ENCODE measurements at regions of chr17 and their contacts with region 1.

Region 1: GRCh38 chr17:28896884-28897768 is at the start of gene FLOT2:
- DNase-seq: peak; percentile 71 to 86 (median 84)
- ATAC-seq: peak; percentile 79 to 81
- H3K4me3 ChIP-seq: peak within 1 kb of the TSS; percentile 66
- H3K27ac ChIP-seq: peak within 1 kb of the TSS; percentile 71
- H3K4me1 ChIP-seq: peaks cover 9% of the 10 kb centered on the region
- H3K27me3 ChIP-seq: no peaks in the 10 kb centered on the region
- total RNA-seq, gene FLOT2: 70.5 to 89.4 (median 79.4) TPM

Region 2: DNA sequence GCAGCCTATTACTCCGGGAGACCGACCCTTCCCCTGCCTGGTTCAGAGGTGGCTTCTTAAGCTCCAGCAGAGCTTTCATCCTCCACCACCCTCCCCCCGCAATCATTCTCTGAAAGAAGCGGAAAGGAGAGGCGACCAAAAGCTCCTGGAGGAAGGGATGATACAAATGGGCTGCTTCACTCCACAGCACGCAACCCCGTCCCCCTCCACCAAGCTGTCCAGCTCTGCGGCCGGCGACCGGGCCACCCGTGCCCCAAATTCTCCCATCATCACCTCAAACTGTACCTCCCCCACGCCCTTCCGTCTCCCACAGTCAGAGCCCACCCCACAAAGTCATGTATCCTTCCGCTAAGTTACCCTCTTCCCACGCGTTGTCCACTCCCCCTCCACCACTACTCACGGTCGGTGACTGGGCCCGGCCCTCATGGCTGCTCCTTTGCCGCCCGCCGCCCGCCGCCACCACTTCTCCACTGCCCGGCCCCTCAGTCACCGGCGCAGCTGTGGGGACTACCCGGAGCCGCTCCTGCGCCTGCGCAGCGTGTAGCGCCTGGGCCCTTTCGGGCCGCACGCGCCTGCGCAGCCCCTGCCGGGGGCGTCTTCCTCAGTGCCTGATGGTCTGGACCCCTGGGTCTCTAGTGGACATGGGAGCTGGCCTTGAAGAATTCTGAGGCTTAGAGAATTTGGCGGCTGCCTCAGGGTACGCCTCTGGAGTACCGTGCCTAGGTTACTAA is 54.7 kb before region 1 on chr17 and contains the start of gene FAM222B:
- intact Hi-C with region 1: loop called in 1 of 4 experiments (anchors 5 kb)
- DNase-seq: peak; percentile 89 to 95 (median 94)
- ATAC-seq: peak; percentile 99 to 100
- H3K4me3 ChIP-seq: peak within 1 kb of the TSS; percentile 70
- H3K27ac ChIP-seq: peak within 1 kb of the TSS; percentile 84
- H3K4me1 ChIP-seq: no peaks in the 10 kb centered on the region
- H3K27me3 ChIP-seq: no peaks in the 10 kb centered on the region
- total RNA-seq, gene FAM222B: 15.3 to 19.6 (median 18.6) TPM

Region 3: DNA sequence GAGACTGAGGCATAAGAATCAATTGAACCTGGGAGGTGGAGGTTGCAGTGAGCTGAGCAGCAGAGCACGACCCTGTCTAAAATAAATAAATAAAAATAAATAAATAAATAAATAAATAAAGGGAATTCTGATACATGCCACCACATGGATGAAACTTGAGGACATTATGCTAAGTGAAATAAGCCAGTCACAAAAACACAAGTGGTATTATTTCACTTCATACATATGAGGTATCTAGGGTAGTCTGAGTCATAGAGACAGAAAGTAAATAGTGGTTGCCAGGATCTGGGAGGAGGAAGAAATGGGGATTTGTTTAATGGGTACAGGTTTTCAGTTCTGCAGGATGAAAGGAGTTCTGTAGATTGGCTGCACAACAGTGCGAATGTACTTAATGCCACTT is 162.2 kb after region 1 on chr17:
- intact Hi-C with region 1: no loop called
- DNase-seq: no peak
- ATAC-seq: no peak
- H3K4me3 ChIP-seq: no peak overlapping the region
- H3K27ac ChIP-seq: no peak overlapping the region
- H3K4me1 ChIP-seq: no peaks in the 10 kb centered on the region
- H3K27me3 ChIP-seq: no peaks in the 10 kb centered on the region

Region 4: GRCh38 chr17:29069526-29070041 is 172.5 kb after region 1 on chr17:
- intact Hi-C with region 1: no loop called
- DNase-seq: peak in 1 of 3 donors; percentile 39
- ATAC-seq: peak; percentile 31 to 37
- H3K4me3 ChIP-seq: no peak overlapping the region
- H3K27ac ChIP-seq: no peak overlapping the region
- H3K4me1 ChIP-seq: peaks cover 6% of the 10 kb centered on the region
- H3K27me3 ChIP-seq: no peaks in the 10 kb centered on the region